ENCODE measurements at regions of chr3 and their contacts with region 1.

Region 1: GRCh38 chr3:189148081-189148507 is 23.7 kb upstream of the TPRG1 start:
- DNase-seq: peak; percentile 57 to 77 (median 70)
- H3K4me3 ChIP-seq: no peak overlapping the region
- H3K27ac ChIP-seq: no peak overlapping the region
- H3K4me1 ChIP-seq: peaks cover 0 to 5% (median 2%) of the 10 kb centered on the region in 4 experiments
- H3K27me3 ChIP-seq: peaks cover 0 to 5% (median 0%) of the 10 kb centered on the region in 5 experiments

Region 2: GRCh38 chr3:189041482-189042090 is 106.5 kb before region 1 on chr3:
- CTCF ChIA-PET with region 1: interaction called, 12 read pairs
- POLR2A ChIA-PET with region 1: no interaction called
- DNase-seq: peak; percentile 69 to 86 (median 84)
- H3K4me3 ChIP-seq: no peak overlapping the region
- H3K27ac ChIP-seq: no peak overlapping the region
- H3K4me1 ChIP-seq: no peaks in the 10 kb centered on the region
- H3K27me3 ChIP-seq: no peaks in the 10 kb centered on the region

Region 3: GRCh38 chr3:189132231-189132707 is 15.8 kb before region 1 on chr3:
- CTCF ChIA-PET with region 1: interaction called, 45 read pairs
- POLR2A ChIA-PET with region 1: no interaction called
- DNase-seq: peak; percentile 81 to 95 (median 91)
- H3K4me3 ChIP-seq: peak overlapping the region in 1 of 7 experiments; percentile 30
- H3K27ac ChIP-seq: no peak overlapping the region
- H3K4me1 ChIP-seq: peaks cover 2 to 17% (median 10%) of the 10 kb centered on the region in 4 experiments
- H3K27me3 ChIP-seq: peaks cover 0 to 11% (median 0%) of the 10 kb centered on the region in 5 experiments

Measured in common myeloid progenitor, CD34-positive (primary cell).